Caco-2 (cell line): ENCODE measurements at regions of chr7 and their contacts with region 1.

Region 1: GRCh38 chr7:149497456-149498261 is at the start of gene ZNF746:
- DNase-seq: peak; percentile 83 to 91
- H3K4me3 ChIP-seq: peak within 1 kb of the TSS; percentile 80
- H3K4me3 Mint-ChIP-seq: peak within 1 kb of the TSS; percentile 90
- H3K27ac Mint-ChIP-seq: peak within 1 kb of the TSS; percentile 66
- H3K4me1 ChIP-seq: peaks cover 8% of the 10 kb centered on the region; the same call in 1 of the 2 replicates
- H3K4me1 Mint-ChIP-seq: peaks cover 20% of the 10 kb centered on the region
- H3K27me3 ChIP-seq: no peaks in the 10 kb centered on the region
- H3K27me3 Mint-ChIP-seq: no peaks in the 10 kb centered on the region
- CTCF ChIP-seq: peak; percentile 50 to 59
- total RNA-seq, gene ZNF746: 19.1 and 19.3 TPM in 2 replicates

Region 2: DNA sequence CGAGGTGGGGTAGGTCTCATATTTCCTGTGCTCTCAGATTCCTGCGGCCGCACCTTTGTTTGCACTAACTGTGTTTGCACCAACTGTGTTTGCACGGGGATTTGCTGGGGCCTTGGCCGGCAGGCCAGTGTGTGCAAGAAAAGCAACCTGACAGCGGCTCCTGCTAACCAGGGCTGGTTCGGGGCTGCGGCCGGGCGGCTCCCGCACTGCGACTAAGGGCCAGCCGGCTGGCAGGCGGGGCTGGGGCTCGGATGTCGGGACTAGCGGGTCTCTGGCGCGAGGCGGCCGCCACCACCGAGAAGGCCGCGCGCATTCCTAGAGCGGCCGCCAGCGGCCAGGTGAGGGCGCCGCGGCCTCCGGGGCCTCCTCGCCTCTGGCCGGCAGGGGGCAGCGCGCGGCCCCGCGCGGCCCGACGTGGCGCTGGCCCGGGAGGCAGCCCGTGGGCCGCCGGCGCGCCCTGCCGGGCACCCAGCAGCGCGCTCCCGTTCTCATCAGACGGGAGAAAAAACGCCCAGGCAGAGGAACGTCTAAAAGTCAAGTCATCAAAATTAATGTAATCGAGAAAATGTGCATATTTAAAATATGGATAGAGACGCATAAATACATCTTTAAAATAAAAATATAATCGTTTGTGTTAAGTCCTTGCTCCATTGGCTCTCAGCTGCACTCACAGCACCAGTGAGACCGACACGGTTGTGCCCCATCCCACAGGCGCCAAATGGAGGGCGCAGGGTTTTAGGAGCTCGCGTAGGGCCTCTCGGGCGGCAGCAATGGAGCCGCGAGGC is 75.3 kb before region 1 on chr7:
- CTCF ChIA-PET with region 1: interaction called, 4 read pairs
- POLR2A ChIA-PET with region 1: no interaction called
- intact Hi-C with region 1: loop called (anchors 2 kb)
- DNase-seq: peak; percentile 88 to 91
- H3K4me3 ChIP-seq: peak overlapping the region; percentile 42
- H3K4me3 Mint-ChIP-seq: peak overlapping the region; percentile 78
- H3K27ac Mint-ChIP-seq: peak overlapping the region; percentile 93
- H3K4me1 ChIP-seq: peaks cover 16% of the 10 kb centered on the region; the same call in 1 of the 2 replicates
- H3K4me1 Mint-ChIP-seq: no peaks in the 10 kb centered on the region
- H3K27me3 ChIP-seq: no peaks in the 10 kb centered on the region
- H3K27me3 Mint-ChIP-seq: no peaks in the 10 kb centered on the region
- CTCF ChIP-seq: peak; percentile 41 to 51

Region 3: GRCh38 chr7:149474309-149475114 is 23.1 kb before region 1 on chr7:
- CTCF ChIA-PET with region 1: no interaction called
- POLR2A ChIA-PET with region 1: no interaction called
- intact Hi-C with region 1: no loop called
- DNase-seq: no peak
- H3K4me3 ChIP-seq: no peak overlapping the region
- H3K4me3 Mint-ChIP-seq: no peak overlapping the region
- H3K27ac Mint-ChIP-seq: no peak overlapping the region
- H3K4me1 ChIP-seq: no peaks in the 10 kb centered on the region
- H3K4me1 Mint-ChIP-seq: peaks cover 15% of the 10 kb centered on the region
- H3K27me3 ChIP-seq: no peaks in the 10 kb centered on the region
- H3K27me3 Mint-ChIP-seq: no peaks in the 10 kb centered on the region
- CTCF ChIP-seq: no peak

Region 4: DNA sequence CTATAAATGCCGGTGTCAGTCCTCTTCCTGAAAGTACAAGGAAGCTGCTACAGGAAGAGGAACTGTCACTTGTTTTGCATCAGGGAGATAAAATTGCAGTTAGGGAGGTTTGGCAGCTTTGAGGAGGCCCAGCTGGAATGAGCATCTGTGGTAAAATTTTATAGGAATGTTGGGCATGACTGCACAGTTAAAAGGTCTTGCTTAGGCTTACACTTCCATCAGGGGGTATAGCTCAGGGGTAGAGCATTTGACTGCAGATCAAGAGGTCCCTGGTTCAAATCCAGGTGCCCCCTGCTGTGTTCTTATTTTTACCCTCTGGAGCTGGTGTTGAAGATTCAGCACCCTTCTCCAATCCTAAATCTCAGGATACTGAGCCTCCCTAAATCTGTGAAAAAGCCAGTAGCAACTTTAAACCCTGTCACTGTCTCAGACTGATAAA is 209.8 kb after region 1 on chr7:
- CTCF ChIA-PET with region 1: no interaction called
- POLR2A ChIA-PET with region 1: no interaction called
- intact Hi-C with region 1: no loop called
- DNase-seq: no peak
- H3K4me3 ChIP-seq: no peak overlapping the region
- H3K4me3 Mint-ChIP-seq: no peak overlapping the region
- H3K27ac Mint-ChIP-seq: no peak overlapping the region
- H3K4me1 ChIP-seq: no peaks in the 10 kb centered on the region
- H3K4me1 Mint-ChIP-seq: no peaks in the 10 kb centered on the region
- H3K27me3 ChIP-seq: no peaks in the 10 kb centered on the region
- H3K27me3 Mint-ChIP-seq: no peaks in the 10 kb centered on the region
- CTCF ChIP-seq: no peak